AG04450 (cell line): ENCODE measurements at regions of chr12 and their contacts with region 1.

Region 1: GRCh38 chr12:15584366-15585041 is 204.7 kb downstream of the EPS8 start:
- DNase-seq: no peak
- H3K4me3 ChIP-seq: no peak overlapping the region
- H3K27ac ChIP-seq: no peak overlapping the region
- H3K27me3 ChIP-seq: no peaks in the 10 kb centered on the region
- CTCF ChIP-seq: peak; percentile 85

Region 2: DNA sequence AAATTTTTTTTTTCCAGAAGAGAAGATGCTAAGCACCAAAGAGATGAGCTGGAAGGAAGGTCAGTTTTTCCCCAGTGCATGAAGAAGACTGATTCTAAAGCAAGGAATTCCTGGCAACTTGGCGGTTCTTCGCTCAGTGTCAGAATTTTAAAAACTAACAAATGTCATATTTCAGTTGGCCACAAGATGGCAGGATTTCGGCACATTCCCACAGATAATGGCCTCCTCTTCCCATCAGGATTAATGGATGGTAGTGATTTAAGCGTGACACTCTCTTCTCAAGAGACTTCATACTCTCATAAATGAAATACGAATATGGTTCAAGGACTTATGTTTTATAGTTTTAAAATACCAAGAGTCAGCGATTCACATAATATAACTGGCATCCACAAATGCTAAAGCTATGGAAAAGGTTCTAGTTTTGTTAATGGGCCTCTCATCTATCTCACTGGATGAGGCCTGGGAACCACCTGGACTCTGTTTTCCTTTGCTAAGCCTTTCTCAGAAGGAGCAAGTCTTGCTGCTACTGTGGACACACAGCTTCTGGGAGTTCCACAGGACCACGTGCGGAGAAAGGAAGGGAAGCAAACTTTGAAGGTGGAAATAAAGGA is 308.3 kb before region 1 on chr12:
- CTCF ChIA-PET with region 1: interaction called, 150 read pairs
- POLR2A ChIA-PET with region 1: no interaction called
- DNase-seq: no peak
- H3K4me3 ChIP-seq: no peak overlapping the region
- H3K27ac ChIP-seq: no peak overlapping the region
- H3K27me3 ChIP-seq: no peaks in the 10 kb centered on the region
- CTCF ChIP-seq: peak; percentile 74

Region 3: GRCh38 chr12:15336768-15337553 is 247.5 kb before region 1 on chr12:
- CTCF ChIA-PET with region 1: no interaction called
- POLR2A ChIA-PET with region 1: no interaction called
- DNase-seq: no peak
- H3K4me3 ChIP-seq: no peak overlapping the region
- H3K27ac ChIP-seq: no peak overlapping the region
- H3K27me3 ChIP-seq: no peaks in the 10 kb centered on the region
- CTCF ChIP-seq: no peak

Region 4: DNA sequence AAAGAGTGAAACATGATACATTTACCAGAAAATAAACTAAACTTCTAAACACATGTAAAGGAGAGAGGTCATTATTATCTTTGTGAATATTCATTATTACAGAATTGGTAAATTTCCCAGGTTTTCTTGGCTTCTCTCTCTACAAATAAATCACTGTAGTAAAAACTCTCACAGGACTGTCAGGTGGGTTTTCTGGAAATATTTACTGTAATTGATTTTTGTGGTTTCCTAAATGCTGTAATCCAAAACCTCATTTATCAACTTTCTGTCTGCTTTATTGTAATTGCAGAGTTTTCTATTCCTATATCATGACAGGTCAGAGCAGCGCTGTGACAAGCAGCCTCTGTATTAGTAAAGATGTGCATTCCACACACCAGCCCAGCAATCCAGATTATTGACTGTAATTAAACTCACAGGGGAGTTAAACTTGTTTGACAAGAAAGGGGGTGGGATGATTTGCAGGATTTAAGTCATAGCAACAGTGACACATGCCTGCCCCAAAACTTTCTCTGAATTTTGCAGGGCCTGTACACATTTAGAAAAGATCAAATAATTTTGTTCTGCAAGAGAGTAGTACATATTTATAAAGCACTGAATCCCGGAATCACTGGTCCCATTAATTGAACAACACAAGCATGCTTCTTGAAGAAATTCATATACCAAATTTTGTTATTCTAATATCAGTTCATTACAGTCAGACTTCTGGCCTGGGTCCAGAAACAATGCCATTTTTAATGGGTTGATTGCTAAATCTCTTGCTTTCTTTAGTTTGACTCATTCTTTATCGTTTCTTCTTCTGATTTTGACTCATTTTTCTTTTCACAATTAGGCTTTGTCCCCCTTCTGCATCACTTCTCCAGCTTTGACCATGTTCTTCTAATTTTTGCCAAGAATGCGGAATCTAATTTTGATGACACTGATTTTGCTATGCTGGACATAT is 220.0 kb before region 1 on chr12:
- CTCF ChIA-PET with region 1: no interaction called
- POLR2A ChIA-PET with region 1: no interaction called
- DNase-seq: no peak
- H3K4me3 ChIP-seq: no peak overlapping the region
- H3K27ac ChIP-seq: no peak overlapping the region
- H3K27me3 ChIP-seq: no peaks in the 10 kb centered on the region
- CTCF ChIP-seq: no peak

Region 5: DNA sequence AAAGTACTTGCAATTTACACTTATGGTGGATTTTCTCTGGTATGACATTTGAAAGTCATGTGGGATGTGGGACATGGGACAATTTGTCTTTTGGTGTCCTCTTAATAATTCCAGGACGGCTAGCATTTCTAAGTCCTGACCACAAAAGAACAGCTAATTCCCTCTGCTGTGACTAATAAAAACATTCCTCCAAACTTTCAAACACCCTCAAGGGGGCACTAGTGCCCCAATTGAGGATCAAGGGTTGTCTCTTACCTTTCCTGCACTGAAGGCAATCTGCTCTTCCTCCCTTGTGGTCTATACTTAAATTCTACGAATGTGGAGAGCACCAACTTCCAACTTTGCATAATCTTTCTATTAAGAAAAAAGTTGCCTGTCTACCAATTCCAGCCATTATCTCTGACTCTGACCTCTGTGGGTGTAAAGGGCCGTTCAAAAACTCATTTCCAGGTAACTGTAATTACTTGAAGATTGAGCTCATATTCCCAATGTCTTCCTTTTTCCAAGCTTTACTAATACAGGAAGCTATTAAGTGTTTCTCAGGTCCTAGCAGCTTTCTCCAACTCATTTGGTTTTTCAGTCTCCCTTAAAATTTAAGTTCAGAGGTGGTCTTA is 52.0 kb before region 1 on chr12:
- CTCF ChIA-PET with region 1: interaction called, 226 read pairs
- POLR2A ChIA-PET with region 1: interaction called, 3 read pairs
- DNase-seq: peak; percentile 50
- H3K4me3 ChIP-seq: no peak overlapping the region
- H3K27ac ChIP-seq: no peak overlapping the region
- H3K27me3 ChIP-seq: no peaks in the 10 kb centered on the region
- CTCF ChIP-seq: peak; percentile 73

Region 6: DNA sequence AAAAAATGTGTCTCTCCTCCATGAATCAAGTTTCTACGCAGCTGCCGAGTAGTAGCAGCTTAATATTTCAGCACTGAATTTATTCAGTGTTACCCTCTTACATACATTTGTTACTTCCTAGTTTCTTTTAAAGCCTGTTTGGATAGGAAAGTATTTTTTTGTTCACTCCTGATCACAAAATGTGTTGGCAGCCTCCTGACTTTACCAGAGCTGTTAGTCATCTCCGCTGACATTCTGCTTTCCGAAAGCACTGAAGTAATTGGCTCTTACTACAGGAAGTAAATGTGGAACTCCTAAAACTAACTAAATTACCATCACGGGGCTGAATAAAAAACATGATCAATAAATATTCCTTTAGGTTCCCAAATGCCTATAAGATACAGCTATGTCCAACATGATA is 20.8 kb before region 1 on chr12:
- CTCF ChIA-PET with region 1: interaction called, 56 read pairs
- POLR2A ChIA-PET with region 1: no interaction called
- DNase-seq: peak; percentile 20
- H3K4me3 ChIP-seq: no peak overlapping the region
- H3K27ac ChIP-seq: no peak overlapping the region
- H3K27me3 ChIP-seq: no peaks in the 10 kb centered on the region
- CTCF ChIP-seq: no peak

Region 7: GRCh38 chr12:15856097-15856982 is 271.8 kb after region 1 on chr12:
- CTCF ChIA-PET with region 1: interaction called, 157 read pairs
- POLR2A ChIA-PET with region 1: no interaction called
- DNase-seq: no peak
- H3K4me3 ChIP-seq: no peak overlapping the region
- H3K27ac ChIP-seq: no peak overlapping the region
- H3K27me3 ChIP-seq: no peaks in the 10 kb centered on the region
- CTCF ChIP-seq: peak; percentile 77

Region 8: DNA sequence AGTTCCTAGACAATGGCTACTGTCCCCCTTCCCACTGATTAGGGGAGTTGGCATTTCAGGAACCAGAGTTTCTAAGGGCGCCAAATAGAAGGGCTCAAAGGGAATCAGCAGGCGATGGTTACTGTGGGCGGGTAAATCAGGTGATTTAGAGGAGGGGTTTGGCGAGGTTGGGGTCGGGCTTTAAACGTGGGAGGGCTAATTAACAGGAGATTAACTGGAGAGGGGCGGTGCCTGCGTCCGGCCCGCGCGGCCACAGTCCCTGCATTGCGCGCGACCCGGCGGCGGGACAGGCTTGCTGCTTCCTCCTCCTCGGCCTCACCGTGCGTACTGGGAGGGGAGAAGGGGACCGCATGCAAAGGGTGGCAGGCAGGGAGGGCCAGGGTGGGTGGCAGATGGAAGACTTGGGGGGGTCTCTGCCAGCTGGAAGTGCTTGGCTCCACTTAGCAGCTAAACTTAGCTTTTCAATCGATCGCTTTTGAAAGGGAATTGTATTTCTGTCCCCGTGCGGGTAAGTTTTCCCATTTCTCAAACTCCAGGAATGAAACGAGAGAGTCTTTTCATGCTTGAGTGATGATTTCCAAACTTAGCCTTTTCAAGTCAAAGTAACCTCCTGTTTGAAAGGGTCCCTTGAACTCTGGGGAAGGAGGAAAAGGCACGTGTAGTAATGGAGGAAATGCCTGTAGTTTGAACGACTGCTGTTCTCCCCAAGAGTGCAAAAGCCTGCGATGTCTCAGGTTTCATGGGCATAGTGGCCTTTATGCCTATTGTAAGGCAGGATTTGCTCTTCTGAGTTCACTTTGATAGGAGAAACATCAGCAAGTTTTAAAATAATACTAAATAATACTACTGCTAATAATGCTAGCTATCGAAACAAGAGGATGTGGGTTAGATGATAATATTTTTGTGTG is 763.1 kb after region 1 on chr12 and contains the start of gene MGST1:
- CTCF ChIA-PET with region 1: no interaction called
- POLR2A ChIA-PET with region 1: no interaction called
- DNase-seq: no peak
- H3K4me3 ChIP-seq: peak within 1 kb of the TSS; percentile 74
- H3K27ac ChIP-seq: peak within 1 kb of the TSS; percentile 99
- H3K27me3 ChIP-seq: no peaks in the 10 kb centered on the region
- CTCF ChIP-seq: no peak
- polyA plus RNA-seq, gene MGST1: 647 and 656 TPM in 2 replicates